ENCODE measurements at regions of chr4 and their contacts with region 1.

Region 1: DNA sequence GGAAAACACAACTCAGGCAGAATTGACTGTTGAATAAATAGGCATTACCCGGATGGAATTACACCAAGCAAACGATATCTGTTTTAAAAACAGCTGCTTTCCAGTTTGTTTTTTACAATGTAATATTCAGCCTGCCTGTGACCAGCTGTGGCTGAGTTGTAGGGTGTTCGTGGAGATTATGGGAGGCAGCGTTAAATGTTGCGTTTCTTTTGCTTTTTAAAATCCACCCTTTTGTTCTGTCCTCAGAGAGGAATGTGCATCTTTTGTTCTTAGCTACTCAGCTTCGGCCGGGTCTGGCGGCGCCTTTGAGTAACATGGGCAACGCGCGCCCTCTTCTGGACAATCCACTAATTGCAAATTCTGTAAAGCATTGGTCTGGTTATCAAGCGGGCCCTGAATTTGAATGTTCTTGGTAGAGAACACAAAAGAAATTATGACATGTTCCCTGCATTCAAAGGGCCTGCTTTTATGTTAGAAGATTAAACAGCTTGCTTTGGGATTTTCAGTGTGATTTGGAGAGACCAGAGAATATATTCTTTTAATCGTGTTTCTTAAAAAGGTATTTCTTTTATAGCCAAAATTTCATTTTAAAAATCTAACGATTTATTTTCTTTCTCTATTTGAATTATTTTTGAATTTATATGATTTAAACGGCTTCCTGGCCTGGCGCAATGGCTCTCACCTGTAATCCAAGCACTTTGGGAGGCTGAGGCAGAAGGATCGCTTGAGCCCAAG is 76.3 kb upstream of the TRIM2 start:
- DNase-seq: peak; percentile 71
- H3K4me3 Mint-ChIP-seq: no peak overlapping the region
- H3K27ac Mint-ChIP-seq: no peak overlapping the region
- H3K4me1 Mint-ChIP-seq: no peaks in the 10 kb centered on the region
- H3K27me3 Mint-ChIP-seq: peaks cover 28% of the 10 kb centered on the region

Region 2: GRCh38 chr4:152850377-152850776 is 277.6 kb before region 1 on chr4:
- intact Hi-C with region 1: loop called (anchors 1 kb)
- DNase-seq: no peak
- H3K4me3 Mint-ChIP-seq: no peak overlapping the region
- H3K27ac Mint-ChIP-seq: no peak overlapping the region
- H3K4me1 Mint-ChIP-seq: peaks cover 23% of the 10 kb centered on the region
- H3K27me3 Mint-ChIP-seq: no peaks in the 10 kb centered on the region